ENCODE measurements at regions of chr6 and their contacts with region 1.

Region 1: DNA sequence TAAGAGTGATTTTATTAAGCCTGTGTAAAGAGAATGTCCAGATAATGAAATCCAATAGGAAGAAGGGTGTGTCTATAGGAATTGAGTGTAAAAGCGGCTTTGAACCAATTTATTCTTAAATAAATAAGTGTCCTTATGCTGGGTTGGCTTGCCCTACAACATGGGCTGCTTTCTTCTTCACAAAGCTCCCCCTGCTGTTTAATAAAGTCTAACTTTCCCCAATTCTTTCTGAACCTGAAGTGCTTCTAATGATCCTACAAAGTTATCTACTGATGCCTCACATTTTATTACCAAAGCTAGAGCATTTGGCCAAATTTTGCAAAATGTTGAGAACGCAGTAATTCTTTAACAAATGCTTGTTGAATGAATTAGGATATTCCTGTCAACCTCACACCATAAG is 36.3 kb upstream of the SIRT5 start:
- DNase-seq: no peak
- H3K4me3 ChIP-seq: no peak overlapping the region
- CTCF ChIP-seq: peak; percentile 5

Region 2: DNA sequence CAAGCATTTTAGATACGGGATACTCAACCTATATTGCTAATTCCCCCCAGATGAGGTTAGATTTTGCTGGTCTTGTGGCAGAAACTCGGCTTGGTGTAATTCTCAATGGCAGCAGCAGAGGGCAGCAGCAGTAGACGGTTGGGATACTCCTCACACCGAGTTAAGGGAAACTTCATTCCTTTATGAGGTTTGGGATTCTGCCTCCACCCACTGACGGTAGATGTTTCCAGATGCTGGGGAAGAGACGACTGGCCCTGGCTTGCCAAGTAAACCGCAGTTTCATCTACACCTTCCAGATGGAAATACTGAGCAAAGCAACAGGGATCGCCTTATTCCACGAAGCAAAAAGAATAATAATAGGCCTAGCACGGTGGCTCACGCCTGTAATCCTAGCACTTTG is 201.5 kb before region 1 on chr6:
- CTCF ChIA-PET with region 1: interaction called, 141 read pairs
- POLR2A ChIA-PET with region 1: no interaction called
- DNase-seq: peak; percentile 40
- H3K4me3 ChIP-seq: no peak overlapping the region
- CTCF ChIP-seq: peak; percentile 89

Region 3: GRCh38 chr6:13561624-13562267 is 23.7 kb after region 1 on chr6:
- CTCF ChIA-PET with region 1: interaction called, 11 read pairs
- POLR2A ChIA-PET with region 1: no interaction called
- DNase-seq: no peak
- H3K4me3 ChIP-seq: no peak overlapping the region
- CTCF ChIP-seq: no peak

Measured in AG04449 (cell line).